Posterior vena cava (tissue), 2 donors: ENCODE measurements at regions of chr4 and their contacts with region 1.

Region 1: DNA sequence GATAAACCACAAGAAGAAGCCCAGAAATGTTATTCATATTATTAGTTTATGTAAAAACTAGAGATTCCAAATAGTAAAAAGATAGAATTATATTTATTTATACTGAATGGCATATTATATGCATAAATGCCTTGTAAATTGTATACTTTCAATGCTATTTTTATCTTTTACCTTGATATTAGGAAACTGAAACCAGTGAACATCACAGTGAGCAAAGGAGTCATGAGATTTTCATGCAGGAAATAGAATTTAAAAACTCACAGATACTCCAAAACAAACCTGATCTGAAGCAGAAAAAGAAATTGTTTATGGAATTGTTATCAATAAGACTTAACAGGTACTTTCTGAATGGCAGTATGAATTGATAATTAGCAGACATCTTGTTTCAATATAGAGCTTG is 207.3 kb upstream of the CENPE start:
- DNase-seq: no peak

Region 2: GRCh38 chr4:101730291-101731117 is 1674.9 kb before region 1 on chr4:
- intact Hi-C with region 1: no loop called
- DNase-seq: peak; percentile 82

Region 3: DNA sequence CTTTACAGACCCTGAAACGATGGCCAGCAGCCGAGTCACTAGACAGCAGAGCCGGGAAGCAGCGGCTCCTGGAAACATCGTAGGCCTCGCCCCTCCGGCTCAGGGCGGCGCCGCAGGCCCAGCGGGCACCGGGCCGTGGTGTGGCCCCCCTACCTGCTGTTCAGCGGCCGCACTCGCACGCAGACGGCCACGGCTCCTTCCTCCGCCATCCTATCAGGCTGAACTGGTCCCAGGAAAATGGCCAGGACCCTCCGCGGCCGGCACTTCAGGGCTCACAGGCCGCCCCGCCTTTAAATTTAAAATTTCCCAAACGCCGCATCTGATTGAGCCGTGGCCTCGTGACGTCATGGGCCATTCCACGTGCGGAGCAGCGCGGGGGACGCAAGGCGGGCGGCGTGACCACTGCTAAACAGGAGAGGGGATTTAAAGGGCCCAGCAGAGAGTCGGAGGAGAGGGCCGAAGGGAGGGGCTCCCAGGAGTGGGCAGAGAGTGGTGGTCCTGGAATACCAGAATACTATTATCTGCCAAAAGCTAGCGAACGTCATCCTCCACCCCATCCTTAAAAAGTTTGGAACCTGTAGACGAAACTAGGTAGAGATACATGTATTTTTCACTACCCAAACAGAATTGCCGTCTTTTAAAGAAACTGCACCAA is 207.2 kb before region 1 on chr4 and contains the start of gene CENPE:
- intact Hi-C with region 1: no loop called
- DNase-seq: peak; percentile 95
- total RNA-seq, gene CENPE: 1.9 to 2.2 TPM

Region 4: DNA sequence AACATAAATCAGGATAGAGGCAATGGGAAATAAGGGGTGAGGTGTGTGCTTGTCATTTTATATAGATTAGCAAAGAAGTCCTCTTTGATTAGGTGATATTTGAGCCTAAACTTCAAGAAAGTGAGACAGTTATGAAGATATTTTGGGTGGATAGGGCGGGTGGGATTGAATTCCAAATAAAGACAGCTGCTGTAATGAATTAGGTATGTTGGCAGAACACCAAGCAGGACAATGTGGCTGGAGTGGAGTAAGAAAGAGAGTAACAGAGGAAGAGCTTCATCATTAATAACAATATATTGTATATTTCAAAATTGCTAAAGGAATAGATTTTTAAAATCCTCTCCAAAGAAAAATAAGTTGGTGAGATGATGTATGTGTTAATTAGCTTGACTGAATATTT is 116.2 kb before region 1 on chr4:
- intact Hi-C with region 1: no loop called
- DNase-seq: no peak

Region 5: GRCh38 chr4:103424853-103425252 is 19.4 kb after region 1 on chr4:
- intact Hi-C with region 1: loop called in 1 of 2 experiments (anchors 1 kb)
- DNase-seq: no peak

Region 6: DNA sequence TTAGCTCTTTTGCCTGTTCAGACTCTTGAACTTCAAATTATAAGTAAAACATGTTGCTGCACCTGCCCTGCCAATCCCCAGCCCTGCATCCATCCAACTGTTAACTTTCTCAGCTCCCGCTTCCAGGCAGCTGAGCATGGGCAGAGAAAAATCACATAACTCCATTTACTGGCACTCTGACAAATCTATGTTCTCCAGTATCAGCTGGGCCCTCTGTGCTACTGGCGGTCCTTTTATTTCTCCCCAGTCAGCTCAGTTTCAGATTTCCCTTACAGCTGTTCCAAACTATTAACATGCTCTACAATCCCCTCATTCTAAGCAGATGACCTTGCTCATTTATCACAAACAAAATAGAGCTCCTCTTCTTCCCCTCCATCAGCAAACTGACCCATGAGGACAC is 1500.9 kb after region 1 on chr4:
- intact Hi-C with region 1: no loop called
- DNase-seq: no peak